Activated CD8-positive, alpha-beta T cell treated with anti-CD3 and anti-CD28 coated beads, Interleukin-2, amount 10 ng/mL, durations not matched to agents 7 days and 5 days (primary cell): ENCODE measurements at regions of chr2 and their contacts with region 1.

Region 1: GRCh38 chr2:207692206-207693065 is 19.0 kb upstream of the CCNYL1 start:
- DNase-seq: peak; percentile 57
- ATAC-seq: peak; percentile 65
- H3K4me3 Mint-ChIP-seq: no peak overlapping the region
- H3K27ac Mint-ChIP-seq: no peak overlapping the region
- H3K4me1 Mint-ChIP-seq: no peaks in the 10 kb centered on the region
- H3K27me3 Mint-ChIP-seq: peaks cover 2% of the 10 kb centered on the region

Region 2: GRCh38 chr2:207710814-207711740 is 18.6 kb after region 1 on chr2 and contains the start of gene CCNYL1:
- CTCF ChIA-PET with region 1: interaction called, 10 read pairs
- POLR2A ChIA-PET with region 1: interaction called, 3 read pairs
- DNase-seq: peak; percentile 99
- ATAC-seq: peak; percentile 99
- H3K4me3 Mint-ChIP-seq: peak within 1 kb of the TSS; percentile 87
- H3K27ac Mint-ChIP-seq: peak within 1 kb of the TSS; percentile 80
- H3K4me1 Mint-ChIP-seq: peaks cover 27% of the 10 kb centered on the region
- H3K27me3 Mint-ChIP-seq: no peaks in the 10 kb centered on the region
- total RNA-seq, gene CCNYL1: 6.1 to 6.3 TPM